ENCODE measurements at regions of chr2 and their contacts with region 1.

Region 1: GRCh38 chr2:108215794-108216211 is 24.0 kb upstream of the SULT1C3 start:
- DNase-seq: peak; percentile 59
- H3K4me3 ChIP-seq: no peak overlapping the region
- H3K27ac ChIP-seq: no peak overlapping the region
- H3K4me1 ChIP-seq: peaks cover 4% of the 10 kb centered on the region
- H3K27me3 ChIP-seq: no peaks in the 10 kb centered on the region
- CTCF ChIP-seq: peak; percentile 37

Region 2: GRCh38 chr2:108169982-108170625 is 45.7 kb before region 1 on chr2:
- intact Hi-C with region 1: no loop called
- DNase-seq: no peak
- H3K4me3 ChIP-seq: no peak overlapping the region
- H3K27ac ChIP-seq: no peak overlapping the region
- H3K4me1 ChIP-seq: no peaks in the 10 kb centered on the region
- H3K27me3 ChIP-seq: no peaks in the 10 kb centered on the region
- CTCF ChIP-seq: peak; percentile 14

Region 3: DNA sequence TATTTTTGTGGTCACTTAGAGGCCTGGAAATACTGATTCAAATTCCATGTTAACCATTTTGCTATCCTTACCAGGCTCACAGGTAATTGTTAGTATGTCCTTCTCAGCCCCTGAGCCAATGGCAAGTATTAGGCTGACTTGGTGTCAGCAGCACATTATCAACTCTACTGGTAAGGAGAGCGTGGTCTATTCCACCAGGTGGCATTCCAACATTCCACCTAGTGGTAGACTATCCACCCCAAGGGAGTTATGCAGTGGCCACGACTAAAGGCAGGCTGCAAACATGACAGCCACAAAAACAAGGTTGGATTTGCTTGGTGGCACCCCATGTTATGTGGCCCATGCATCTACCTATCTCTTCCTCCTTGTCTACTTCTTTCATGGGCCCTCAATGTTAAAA is 201.5 kb after region 1 on chr2:
- intact Hi-C with region 1: loop called (anchors 10 kb)
- DNase-seq: no peak
- H3K4me3 ChIP-seq: no peak overlapping the region
- H3K27ac ChIP-seq: no peak overlapping the region
- H3K4me1 ChIP-seq: no peaks in the 10 kb centered on the region
- H3K27me3 ChIP-seq: no peaks in the 10 kb centered on the region
- CTCF ChIP-seq: peak; percentile 28

Measured in colonic mucosa (tissue), 4 donors.